ENCODE measurements at regions of chr3 and their contacts with region 1.

Region 1: DNA sequence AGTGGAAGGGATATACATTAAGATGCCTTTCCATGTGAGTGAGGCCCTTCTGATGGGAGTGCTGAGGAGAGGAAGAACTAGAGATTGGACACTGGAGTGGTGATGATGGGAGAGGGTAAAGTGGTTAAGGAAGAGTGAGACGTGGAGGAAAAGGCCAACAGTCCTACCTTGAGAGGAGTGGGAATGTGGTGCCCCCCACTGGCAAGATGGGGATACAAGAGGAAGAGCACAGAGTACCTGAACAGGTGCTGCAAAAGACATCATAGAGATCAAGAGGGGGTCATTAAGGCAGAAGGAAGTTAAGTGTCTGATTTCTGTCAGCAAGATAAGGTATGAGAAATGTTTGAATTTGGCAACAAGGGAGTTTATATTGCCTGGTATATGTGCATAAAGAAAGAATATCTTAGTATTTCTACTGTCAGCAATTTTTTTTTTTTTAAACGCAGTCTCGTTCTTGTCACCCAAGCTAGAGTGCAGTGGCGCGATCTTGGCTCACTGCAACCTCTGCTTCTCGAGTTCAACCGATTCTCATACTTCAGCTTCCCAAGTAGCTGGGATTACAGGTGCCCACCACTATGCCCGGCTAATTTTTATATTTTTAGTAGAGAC is 34.0 kb downstream of the ARIH2 start:
- DNase-seq: no peak

Region 2: GRCh38 chr3:48898383-48899234 is 54.0 kb before region 1 on chr3 and contains the start of gene SLC25A20:
- intact Hi-C with region 1: loop called (anchors 2 kb)
- DNase-seq: peak; percentile 97
- total RNA-seq, gene SLC25A20: 36.7 TPM